ENCODE measurements at regions of chr9 and their contacts with region 1.

Region 1: DNA sequence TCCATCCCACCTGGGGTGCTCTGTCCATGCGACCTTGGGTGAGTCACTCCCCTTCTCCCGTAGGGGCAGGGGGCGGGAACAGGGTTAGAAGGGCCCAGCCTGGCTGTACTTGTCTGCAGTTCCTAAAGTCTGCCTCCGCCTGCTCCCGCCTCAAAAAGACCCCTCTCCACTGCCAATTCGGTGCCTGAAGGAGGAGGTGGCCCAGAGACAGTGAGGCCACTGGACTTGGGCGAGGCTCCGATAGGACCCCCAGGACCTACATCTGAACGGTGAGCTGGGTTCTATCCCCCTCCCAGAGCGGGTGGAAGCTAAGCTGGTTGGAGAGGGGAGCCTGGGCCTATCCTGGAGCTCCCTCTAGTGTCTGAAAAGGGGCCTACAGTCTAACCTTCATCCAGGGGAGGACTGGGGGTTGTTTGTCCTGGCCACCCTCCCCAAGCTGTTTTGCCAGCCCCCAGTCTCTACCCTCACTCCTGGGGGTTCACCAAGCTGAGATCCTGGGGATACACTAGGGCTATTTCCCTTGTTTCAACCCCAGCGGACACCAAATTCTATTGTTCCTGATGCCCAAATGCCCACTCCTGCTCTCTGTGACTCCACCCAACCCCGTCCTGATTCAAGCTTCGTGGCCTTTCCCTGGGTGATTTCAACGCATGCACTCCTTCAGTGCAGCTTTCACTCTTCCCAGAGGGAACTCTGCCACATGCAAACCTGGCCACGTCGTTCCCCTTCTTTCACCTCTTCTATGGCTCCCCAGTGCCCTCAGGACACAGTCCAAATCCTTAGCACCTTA is 6.1 kb upstream of the CRB2 start:
- DNase-seq: peak; percentile 63
- H3K4me3 ChIP-seq: no peak overlapping the region
- H3K27ac ChIP-seq: no peak overlapping the region
- H3K4me1 ChIP-seq: no peaks in the 10 kb centered on the region
- H3K27me3 ChIP-seq: peaks cover 0 to 2% of the 10 kb centered on the region in 2 experiments
- CTCF ChIP-seq: peak; percentile 84 to 95
- POLR2A ChIP-seq: no peak

Region 2: GRCh38 chr9:122904823-122905710 is 444.8 kb before region 1 on chr9 and contains the start of gene RC3H2:
- CTCF ChIA-PET with region 1: interaction called, 4 read pairs
- POLR2A ChIA-PET with region 1: no interaction called
- dilution Hi-C with region 1: no loop called
- intact Hi-C with region 1: loop called (anchors 5 kb)
- DNase-seq: peak; percentile 100
- H3K4me3 ChIP-seq: peak within 1 kb of the TSS; percentile 53 to 92 (median 54)
- H3K27ac ChIP-seq: peak within 1 kb of the TSS; percentile 73
- H3K4me1 ChIP-seq: peaks cover 21% of the 10 kb centered on the region
- H3K27me3 ChIP-seq: no peaks in the 10 kb centered on the region
- CTCF ChIP-seq: no peak
- POLR2A ChIP-seq: peak; percentile 88
- total RNA-seq, gene RC3H2: 57.3 and 63.0 TPM in 2 replicates

Region 3: DNA sequence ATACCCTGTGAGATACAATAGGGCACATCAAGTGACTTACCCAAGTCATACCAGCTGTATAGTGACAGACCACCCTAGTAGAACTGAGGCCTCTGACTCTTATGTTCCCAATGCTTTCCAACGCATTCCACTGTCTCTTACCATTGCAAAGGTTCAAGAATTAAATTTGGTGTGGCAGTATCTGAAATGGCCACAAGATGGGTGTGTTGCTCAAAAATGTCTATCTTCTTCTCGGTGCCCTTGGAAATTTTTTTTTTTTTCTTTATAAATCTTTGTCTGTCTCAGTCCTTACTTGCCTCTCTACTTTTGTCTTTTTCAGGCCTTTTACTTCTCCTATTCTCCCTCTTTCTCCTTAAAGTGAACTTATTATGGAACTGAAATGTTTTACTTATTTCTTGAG is 268.1 kb before region 1 on chr9:
- CTCF ChIA-PET with region 1: interaction called, 148 read pairs
- POLR2A ChIA-PET with region 1: interaction called, 3 read pairs
- dilution Hi-C with region 1: no loop called
- intact Hi-C with region 1: loop called (anchors 1 kb)
- DNase-seq: peak; percentile 76
- H3K4me3 ChIP-seq: no peak overlapping the region
- H3K27ac ChIP-seq: no peak overlapping the region
- H3K4me1 ChIP-seq: no peaks in the 10 kb centered on the region
- H3K27me3 ChIP-seq: no peaks in the 10 kb centered on the region
- CTCF ChIP-seq: peak; percentile 49 to 51
- POLR2A ChIP-seq: no peak

Region 4: DNA sequence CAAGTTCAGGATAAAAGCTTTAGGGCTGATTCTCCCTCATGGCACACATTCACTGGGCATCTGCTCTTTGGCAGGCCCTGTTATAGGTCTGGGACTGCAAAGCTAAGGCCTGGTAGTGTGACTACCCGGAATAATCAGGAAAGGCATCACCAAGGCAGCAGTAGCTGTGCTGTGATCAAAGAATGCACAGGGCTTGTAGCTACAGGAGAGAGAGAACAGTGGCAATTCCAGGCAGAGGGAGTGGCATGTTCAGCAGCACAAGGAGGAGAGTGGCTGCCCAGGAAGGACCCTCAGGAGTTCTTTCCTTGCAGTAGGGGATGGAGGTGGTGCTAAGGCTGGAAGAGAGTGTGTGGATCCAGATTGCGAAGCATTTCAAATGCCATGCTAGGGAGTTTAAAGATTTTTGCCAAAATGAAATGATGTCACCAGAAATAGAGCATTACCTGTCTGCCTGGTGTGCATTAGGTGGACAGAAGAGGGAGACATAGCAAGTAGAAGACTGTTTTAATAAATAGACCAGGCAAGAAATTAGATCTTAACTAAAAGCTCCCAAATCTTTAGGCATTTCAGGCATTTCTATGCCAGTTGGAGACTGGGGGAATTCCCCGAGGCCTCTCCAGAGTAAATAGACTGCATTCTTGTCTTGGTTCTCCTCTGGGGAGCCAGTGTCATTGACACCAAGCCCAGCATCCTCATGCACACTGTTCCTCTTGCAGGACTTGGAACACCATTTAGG is 247.3 kb before region 1 on chr9:
- CTCF ChIA-PET with region 1: interaction called, 49 read pairs
- POLR2A ChIA-PET with region 1: no interaction called
- dilution Hi-C with region 1: no loop called
- intact Hi-C with region 1: loop called (anchors 2 kb)
- DNase-seq: peak; percentile 20
- H3K4me3 ChIP-seq: no peak overlapping the region
- H3K27ac ChIP-seq: no peak overlapping the region
- H3K4me1 ChIP-seq: no peaks in the 10 kb centered on the region
- H3K27me3 ChIP-seq: no peaks in the 10 kb centered on the region
- CTCF ChIP-seq: peak; percentile 6 to 18
- POLR2A ChIP-seq: no peak

Region 5: DNA sequence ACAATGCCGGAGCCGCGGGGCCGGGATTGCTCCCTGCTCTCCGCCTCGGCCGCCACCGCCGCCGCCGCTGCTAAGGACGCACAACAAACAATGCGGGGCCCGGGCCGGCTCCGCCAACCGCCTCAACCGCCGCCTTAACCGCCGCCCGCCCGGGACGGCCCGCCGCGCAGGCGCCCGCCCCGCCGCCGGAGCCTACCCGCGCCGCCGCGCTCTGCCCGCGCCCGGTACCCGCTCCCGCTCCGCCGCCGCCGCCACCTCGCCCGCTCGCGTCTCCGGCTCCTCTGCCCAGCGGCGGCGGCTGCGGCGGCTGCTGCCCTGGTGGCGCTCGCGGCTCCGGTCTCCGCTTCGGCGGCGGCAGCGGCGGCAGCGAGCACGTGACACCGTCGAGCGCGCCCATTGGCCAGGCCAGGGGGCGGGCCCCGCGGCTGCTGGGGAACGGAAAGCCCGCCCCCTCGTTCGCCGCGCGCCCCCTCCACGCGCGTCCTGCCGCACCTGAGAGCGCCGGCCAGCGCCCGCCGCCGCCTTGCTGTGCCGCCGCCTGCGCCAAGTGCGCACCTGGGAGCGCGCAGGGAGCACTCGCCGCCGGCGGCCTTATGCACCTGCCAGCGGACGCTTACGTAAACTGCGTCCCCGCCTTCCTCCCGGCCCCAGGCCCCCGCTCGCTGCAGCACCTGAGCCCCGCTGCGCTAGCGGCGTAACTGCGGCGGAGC is 81.5 kb before region 1 on chr9 and contains the start of gene STRBP:
- CTCF ChIA-PET with region 1: interaction called, 4 read pairs
- POLR2A ChIA-PET with region 1: no interaction called
- dilution Hi-C with region 1: no loop called
- intact Hi-C with region 1: loop called (anchors 2 kb)
- DNase-seq: peak; percentile 84
- H3K4me3 ChIP-seq: peak within 1 kb of the TSS; percentile 57 to 95 (median 60)
- H3K27ac ChIP-seq: no peak within 1 kb of the TSS
- H3K4me1 ChIP-seq: peaks cover 2% of the 10 kb centered on the region
- H3K27me3 ChIP-seq: peaks cover 0 to 4% of the 10 kb centered on the region in 2 experiments
- CTCF ChIP-seq: no peak
- POLR2A ChIP-seq: no peak
- total RNA-seq, gene STRBP: 14.8 and 15.4 TPM in 2 replicates

Region 6: GRCh38 chr9:123380852-123381642 is 31.2 kb after region 1 on chr9:
- CTCF ChIA-PET with region 1: interaction called, 117 read pairs
- POLR2A ChIA-PET with region 1: no interaction called
- dilution Hi-C with region 1: no loop called
- intact Hi-C with region 1: loop called (anchors 1 kb)
- DNase-seq: no peak
- H3K4me3 ChIP-seq: no peak overlapping the region
- H3K27ac ChIP-seq: no peak overlapping the region
- H3K4me1 ChIP-seq: no peaks in the 10 kb centered on the region
- H3K27me3 ChIP-seq: peaks cover 0 to under 1% of the 10 kb centered on the region in 2 experiments
- CTCF ChIP-seq: no peak
- POLR2A ChIP-seq: no peak